ENCODE measurements at regions of chr13 and their contacts with region 1.

Region 1: GRCh38 chr13:108961542-108962125 is 332.2 kb downstream of the MYO16 start:
- DNase-seq: peak; percentile 38 to 82 (median 69)
- H3K4me3 ChIP-seq: no peak overlapping the region
- H3K4me3 Mint-ChIP-seq: no peak overlapping the region
- H3K27ac ChIP-seq: no peak overlapping the region
- H3K27ac Mint-ChIP-seq: no peak overlapping the region
- H3K4me1 ChIP-seq: no peaks in the 10 kb centered on the region
- H3K4me1 Mint-ChIP-seq: peaks cover 4% of the 10 kb centered on the region
- H3K27me3 ChIP-seq: no peaks in the 10 kb centered on the region
- H3K27me3 Mint-ChIP-seq: peaks cover 0 to 2% (median 1%) of the 10 kb centered on the region in 3 donors
- CTCF ChIP-seq: peak; percentile 88

Region 2: GRCh38 chr13:109096101-109096500 is 134.5 kb after region 1 on chr13:
- intact Hi-C with region 1: no loop called
- DNase-seq: peak in 1 of 3 donors; percentile 28
- H3K4me3 ChIP-seq: no peak overlapping the region
- H3K4me3 Mint-ChIP-seq: no peak overlapping the region
- H3K27ac ChIP-seq: no peak overlapping the region
- H3K27ac Mint-ChIP-seq: no peak overlapping the region
- H3K4me1 ChIP-seq: no peaks in the 10 kb centered on the region
- H3K4me1 Mint-ChIP-seq: peaks cover 12% of the 10 kb centered on the region
- H3K27me3 ChIP-seq: no peaks in the 10 kb centered on the region
- H3K27me3 Mint-ChIP-seq: peaks cover 3 to 4% (median 4%) of the 10 kb centered on the region in 3 donors
- CTCF ChIP-seq: no peak

Region 3: GRCh38 chr13:110109910-110110309 is 1148.3 kb after region 1 on chr13:
- intact Hi-C with region 1: loop called (anchors 5 to 10 kb)
- DNase-seq: no peak
- H3K4me3 ChIP-seq: no peak overlapping the region
- H3K4me3 Mint-ChIP-seq: no peak overlapping the region
- H3K27ac ChIP-seq: no peak overlapping the region
- H3K27ac Mint-ChIP-seq: peak overlapping the region in 1 of 7 donors; percentile 51
- H3K4me1 ChIP-seq: peaks cover 9 to 11% of the 10 kb centered on the region in 2 donors
- H3K4me1 Mint-ChIP-seq: peaks cover 9% of the 10 kb centered on the region
- H3K27me3 ChIP-seq: no peaks in the 10 kb centered on the region
- H3K27me3 Mint-ChIP-seq: peaks cover 2 to 5% (median 4%) of the 10 kb centered on the region in 3 donors
- CTCF ChIP-seq: no peak